ENCODE measurements at regions of chrX and their contacts with region 1.

Region 1: GRCh38 chrX:77910108-77910840 is at the start of gene ATP7A:
- DNase-seq: peak; percentile 69
- ATAC-seq: peak; percentile 93
- H3K4me3 ChIP-seq: peak within 1 kb of the TSS; percentile 71
- H3K27ac ChIP-seq: peak within 1 kb of the TSS; percentile 62
- H3K4me1 ChIP-seq: no peaks in the 10 kb centered on the region
- H3K27me3 ChIP-seq: no peaks in the 10 kb centered on the region
- CTCF ChIP-seq: peak; percentile 53 to 68 (median 65)
- EP300 ChIP-seq: no peak
- POLR2A ChIP-seq: peak; percentile 74
- RAD21 ChIP-seq: peak; percentile 68
- polyA plus RNA-seq, gene ATP7A: 2.5 to 3.7 TPM

Region 2: GRCh38 chrX:78066110-78066509 is 155.8 kb after region 1 on chrX:
- CTCF ChIA-PET with region 1: interaction called, 4 read pairs
- POLR2A ChIA-PET with region 1: interaction called, 7 read pairs
- RAD21 ChIA-PET with region 1: interaction called, 11 read pairs
- SMC1A ChIA-PET with region 1: interaction called, 5 read pairs
- in situ Hi-C with region 1: no loop called
- intact Hi-C with region 1: no loop called
- DNase-seq: no peak
- ATAC-seq: no peak
- H3K4me3 ChIP-seq: no peak overlapping the region
- H3K27ac ChIP-seq: peak overlapping the region; percentile 87
- H3K4me1 ChIP-seq: peaks cover 19% of the 10 kb centered on the region
- H3K27me3 ChIP-seq: no peaks in the 10 kb centered on the region
- CTCF ChIP-seq: no peak
- EP300 ChIP-seq: no peak
- POLR2A ChIP-seq: no peak
- RAD21 ChIP-seq: no peak

Region 3: DNA sequence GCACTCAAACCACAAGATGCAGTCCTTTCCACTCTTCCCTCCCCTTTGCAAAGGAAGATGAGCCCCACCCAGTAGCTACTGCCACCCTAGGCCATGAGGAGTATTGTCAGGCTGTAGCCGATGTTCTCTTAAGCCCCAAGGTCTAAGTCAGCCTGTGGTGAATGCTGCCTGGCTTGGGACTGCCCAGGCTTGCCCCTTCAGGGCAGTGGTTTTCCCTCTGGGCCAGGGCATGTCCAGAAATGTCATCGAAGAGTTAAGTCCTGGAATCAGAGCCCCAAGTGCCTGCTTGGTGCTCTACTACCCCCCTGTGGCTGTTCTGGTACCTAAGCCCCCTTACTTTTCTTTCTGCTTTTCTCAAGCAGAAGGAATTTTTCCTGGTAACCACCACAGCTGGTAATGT is 182.0 kb after region 1 on chrX:
- CTCF ChIA-PET with region 1: interaction called, 11 read pairs
- POLR2A ChIA-PET with region 1: no interaction called
- RAD21 ChIA-PET with region 1: interaction called, 6 read pairs
- SMC1A ChIA-PET with region 1: interaction called, 3 read pairs
- in situ Hi-C with region 1: no loop called
- intact Hi-C with region 1: loop called (anchors 1 kb)
- DNase-seq: peak; percentile 37
- ATAC-seq: peak; percentile 98
- H3K4me3 ChIP-seq: no peak overlapping the region
- H3K27ac ChIP-seq: no peak overlapping the region
- H3K4me1 ChIP-seq: no peaks in the 10 kb centered on the region
- H3K27me3 ChIP-seq: no peaks in the 10 kb centered on the region
- CTCF ChIP-seq: peak; percentile 45; a peak in 5 of 6 replicates
- EP300 ChIP-seq: no peak
- POLR2A ChIP-seq: no peak
- RAD21 ChIP-seq: peak; percentile 73

Region 4: DNA sequence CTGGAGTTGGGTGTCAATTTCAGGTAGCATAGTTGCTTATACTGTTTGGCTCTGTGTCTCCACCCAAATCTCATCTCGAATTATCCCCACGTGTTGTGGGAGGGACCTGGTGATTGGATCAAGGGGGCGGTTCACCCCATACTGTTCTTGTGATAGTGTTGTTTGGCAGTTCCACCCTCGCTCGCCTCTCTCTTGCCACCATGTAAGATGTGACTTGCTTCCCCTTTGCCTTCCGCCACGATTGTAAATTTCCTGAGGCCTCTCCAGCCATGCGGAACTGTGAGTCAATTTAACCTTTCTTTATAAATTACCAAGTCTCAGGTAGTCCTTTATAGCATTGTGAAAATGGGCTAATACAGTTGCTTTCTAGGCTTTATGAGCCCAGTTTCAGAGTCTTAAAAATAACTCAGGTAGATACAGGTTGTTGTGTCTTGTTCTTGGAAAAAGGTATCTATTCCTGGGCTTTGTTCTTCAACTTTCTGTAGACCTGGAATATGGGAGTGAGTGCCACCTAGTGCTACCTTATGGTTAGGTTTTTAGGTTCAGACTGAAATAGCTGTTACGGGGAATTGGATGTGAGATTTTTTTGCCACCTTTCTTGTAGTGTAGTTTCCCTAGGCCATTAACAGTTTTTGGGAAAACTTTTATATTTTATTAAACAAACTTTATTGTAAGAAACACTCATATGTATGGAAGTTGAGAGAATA is 209.4 kb after region 1 on chrX:
- CTCF ChIA-PET with region 1: no interaction called
- POLR2A ChIA-PET with region 1: interaction called, 11 read pairs
- RAD21 ChIA-PET with region 1: no interaction called
- SMC1A ChIA-PET with region 1: no interaction called
- in situ Hi-C with region 1: no loop called
- intact Hi-C with region 1: no loop called
- DNase-seq: no peak
- ATAC-seq: peak; percentile 62
- H3K4me3 ChIP-seq: no peak overlapping the region
- H3K27ac ChIP-seq: no peak overlapping the region
- H3K4me1 ChIP-seq: no peaks in the 10 kb centered on the region
- H3K27me3 ChIP-seq: no peaks in the 10 kb centered on the region
- CTCF ChIP-seq: peak; percentile 16 to 29 (median 17); a peak in 2 of 6 replicates
- EP300 ChIP-seq: no peak
- POLR2A ChIP-seq: no peak
- RAD21 ChIP-seq: peak; percentile 31; the same call in 1 of the 2 replicates